Pancreas (tissue), 10 donors: ENCODE measurements at regions of chr20 and their contacts with region 1.

Region 1: GRCh38 chr20:50165684-50166554 is 12.4 kb upstream of the PEDS1 start:
- DNase-seq: peak; percentile 82 to 97 (median 96)
- ATAC-seq: peak; percentile 96 to 99 (median 98)
- H3K4me3 ChIP-seq: peak overlapping the region in 2 of 4 donors; percentile 4 to 29
- H3K27ac ChIP-seq: peak overlapping the region; percentile 2 to 82 (median 49)
- H3K4me1 ChIP-seq: peaks cover 5 to 11% (median 6%) of the 10 kb centered on the region in 3 donors
- H3K27me3 ChIP-seq: no peaks in the 10 kb centered on the region
- CTCF ChIP-seq: no peak

Region 2: GRCh38 chr20:49508435-49509199 is 657.3 kb before region 1 on chr20:
- intact Hi-C with region 1: no loop called
- DNase-seq: no peak
- ATAC-seq: peak in 3 of 4 donors; percentile 43 to 72 (median 65)
- H3K4me3 ChIP-seq: no peak overlapping the region
- H3K27ac ChIP-seq: no peak overlapping the region
- H3K4me1 ChIP-seq: no peaks in the 10 kb centered on the region
- H3K27me3 ChIP-seq: no peaks in the 10 kb centered on the region
- CTCF ChIP-seq: peak in 2 of 4 donors; percentile 27

Region 3: DNA sequence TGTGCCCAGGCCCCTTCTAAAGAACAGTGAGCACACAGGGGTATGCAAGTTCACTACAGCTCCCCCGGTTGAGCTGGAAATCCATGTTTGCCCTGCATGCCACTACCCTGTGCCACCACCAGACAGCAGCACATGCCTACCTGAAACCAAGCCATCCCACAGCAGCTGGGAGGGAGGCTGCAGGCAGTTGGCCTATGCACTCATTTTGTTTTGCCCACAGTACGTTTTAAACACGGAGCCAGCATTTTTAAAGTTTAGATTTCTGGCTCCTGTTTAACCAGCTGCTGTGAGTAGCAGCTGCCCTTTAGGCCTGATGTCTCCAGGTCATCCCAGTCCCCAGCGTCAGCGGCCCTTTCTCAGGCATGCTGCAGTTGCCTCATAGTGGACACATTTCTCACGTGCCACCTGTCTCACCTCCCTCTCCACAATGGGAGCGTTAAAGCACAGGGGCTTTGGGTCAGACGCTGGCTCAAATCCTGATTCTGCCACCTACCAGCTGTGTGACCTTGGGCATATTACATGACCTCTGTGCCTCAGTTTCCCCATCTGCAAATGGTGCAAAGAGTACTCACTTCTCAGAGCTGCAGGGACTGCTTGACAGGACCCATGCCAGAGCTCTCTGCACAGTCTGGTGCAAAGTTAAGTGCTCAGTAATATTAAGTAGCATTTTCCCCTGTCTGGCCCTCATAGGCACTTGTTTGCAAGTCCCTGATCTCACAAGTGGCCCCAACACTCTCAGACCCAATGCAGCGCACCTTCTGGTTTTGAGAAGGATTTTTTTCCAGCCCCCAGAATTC is 44.8 kb before region 1 on chr20:
- intact Hi-C with region 1: loop called in 1 of 3 experiments (anchors 5 kb)
- DNase-seq: peak; percentile 66 to 85 (median 70)
- ATAC-seq: peak; percentile 77 to 91 (median 90)
- H3K4me3 ChIP-seq: no peak overlapping the region
- H3K27ac ChIP-seq: no peak overlapping the region
- H3K4me1 ChIP-seq: peaks cover 0 to 7% (median 3%) of the 10 kb centered on the region in 3 donors
- H3K27me3 ChIP-seq: no peaks in the 10 kb centered on the region
- CTCF ChIP-seq: peak; percentile 73 to 88 (median 86)